A549 (cell line): ENCODE measurements at regions of chr19 and their contacts with region 1.

Region 1: GRCh38 chr19:33302175-33302973 is at the start of gene CEBPA:
- DNase-seq: peak; percentile 93 to 95
- ATAC-seq: peak; percentile 83 to 92
- H3K4me3 ChIP-seq: peak within 1 kb of the TSS; percentile 63
- H3K27ac ChIP-seq: peak within 1 kb of the TSS; percentile 86 to 93
- H3K4me1 ChIP-seq: peaks cover 11% of the 10 kb centered on the region
- CTCF ChIP-seq: peak; percentile 99
- EP300 ChIP-seq: no peak
- POLR2A ChIP-seq: peak; percentile 100
- RAD21 ChIP-seq: no peak; a peak in 3 of 5 replicates
- polyA plus RNA-seq, gene CEBPA: 3.5 and 4.3 TPM in 2 replicates

Region 2: GRCh38 chr19:33235269-33235995 is 66.9 kb before region 1 on chr19:
- CTCF ChIA-PET with region 1: interaction called, 603 read pairs
- POLR2A ChIA-PET with region 1: interaction called, 5 read pairs
- DNase-seq: peak; percentile 88 to 98
- ATAC-seq: peak; percentile 66 to 90
- H3K4me3 ChIP-seq: no peak overlapping the region
- H3K27ac ChIP-seq: 0 out of 6 replicates have a peak overlapping the region, but pooled peaks of 1 of the 2 experiments have one; percentile 13
- H3K4me1 ChIP-seq: no peaks in the 10 kb centered on the region; the same call in 2 of the 3 replicates
- CTCF ChIP-seq: peak; percentile 99
- EP300 ChIP-seq: no peak
- POLR2A ChIP-seq: no peak
- RAD21 ChIP-seq: peak; percentile 94 to 95

Region 3: DNA sequence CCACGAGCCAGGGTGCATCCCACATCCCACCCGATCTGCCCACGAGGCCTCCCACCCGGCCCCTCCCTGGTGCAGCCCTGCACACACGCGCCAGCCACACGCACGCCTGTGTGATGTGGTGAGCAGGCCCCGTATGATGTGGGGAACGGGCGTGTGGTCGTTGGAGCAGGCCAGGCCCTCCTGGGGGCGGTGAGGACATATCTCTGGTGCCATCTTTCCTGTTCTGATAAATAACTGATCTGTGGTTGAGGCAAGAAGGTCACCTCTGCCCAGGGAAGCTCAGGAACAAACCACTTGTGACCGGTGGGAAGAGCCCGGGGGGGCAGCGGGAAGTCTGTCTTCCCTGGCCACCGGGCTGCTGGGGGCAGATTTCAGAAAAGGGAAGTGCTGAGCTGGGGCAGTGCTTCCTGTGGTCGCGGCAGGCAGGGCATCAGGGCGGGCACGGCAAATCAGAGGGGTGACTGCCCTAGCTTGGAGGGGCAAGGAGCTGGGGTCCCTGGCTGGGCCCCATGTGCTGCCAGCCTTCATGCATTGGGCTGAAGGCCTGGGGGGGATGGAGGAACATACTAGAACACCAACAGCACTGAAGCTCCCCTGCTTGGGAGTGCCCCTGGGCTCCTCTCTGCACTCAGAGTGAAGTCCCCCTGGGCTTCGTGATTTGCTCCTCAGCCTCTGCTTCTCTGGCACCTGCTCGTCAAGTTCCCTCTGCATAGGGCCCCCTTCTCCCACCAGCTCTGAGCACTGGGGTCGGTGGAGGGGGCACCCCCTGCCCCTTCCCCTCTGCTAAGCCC is 41.6 kb before region 1 on chr19:
- CTCF ChIA-PET with region 1: interaction called, 30 read pairs
- POLR2A ChIA-PET with region 1: interaction called, 17 read pairs
- DNase-seq: no peak
- ATAC-seq: 0 out of 6 replicates have a peak, but pooled peaks of 1 of the 2 experiments have one; percentile 7
- H3K4me3 ChIP-seq: no peak overlapping the region
- H3K27ac ChIP-seq: no peak overlapping the region
- H3K4me1 ChIP-seq: no peaks in the 10 kb centered on the region
- CTCF ChIP-seq: no peak
- EP300 ChIP-seq: no peak
- POLR2A ChIP-seq: no peak
- RAD21 ChIP-seq: no peak

Region 4: GRCh38 chr19:33286899-33287298 is 15.5 kb before region 1 on chr19:
- CTCF ChIA-PET with region 1: interaction called, 57 read pairs
- POLR2A ChIA-PET with region 1: interaction called, 33 read pairs
- DNase-seq: no peak
- ATAC-seq: no peak
- H3K4me3 ChIP-seq: no peak overlapping the region
- H3K27ac ChIP-seq: no peak overlapping the region
- H3K4me1 ChIP-seq: peaks cover 18% of the 10 kb centered on the region
- CTCF ChIP-seq: no peak
- EP300 ChIP-seq: no peak
- POLR2A ChIP-seq: no peak
- RAD21 ChIP-seq: no peak

Region 5: DNA sequence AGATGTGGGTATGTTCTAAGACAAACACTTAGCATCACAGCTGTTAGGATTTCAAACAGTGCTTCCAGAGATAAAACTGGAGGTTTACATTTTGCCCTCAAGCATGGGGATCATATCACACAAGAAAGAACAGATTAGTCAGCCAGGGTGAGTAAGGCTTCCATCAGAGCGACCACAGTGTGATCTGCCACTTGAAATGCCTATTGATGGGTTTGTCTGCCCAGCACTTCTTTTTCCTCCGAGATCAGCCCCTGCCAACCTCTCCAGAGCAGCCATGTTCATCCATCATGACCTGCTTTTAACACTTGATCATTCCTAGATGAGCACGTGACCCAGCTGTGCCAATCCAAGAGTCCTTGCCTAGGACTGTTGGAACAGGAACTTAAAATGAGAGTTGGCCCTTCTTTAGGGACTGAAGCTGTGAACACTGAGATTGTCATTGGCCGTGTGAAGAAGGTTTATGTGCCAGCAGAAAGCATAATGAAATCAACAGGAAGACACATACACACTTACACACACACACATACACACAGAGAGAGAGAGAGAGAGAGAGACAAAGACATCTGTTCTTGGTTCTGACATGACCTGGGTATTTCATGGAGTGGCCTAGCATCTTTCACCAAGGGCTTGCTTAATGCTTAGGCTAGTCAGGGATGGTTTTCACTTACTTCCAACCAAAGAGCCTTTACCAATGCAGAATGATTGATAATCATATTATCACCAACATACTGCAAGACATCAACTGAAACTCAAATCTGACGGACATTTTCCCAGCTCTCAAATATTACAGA is 65.9 kb after region 1 on chr19:
- CTCF ChIA-PET with region 1: interaction called, 57 read pairs
- POLR2A ChIA-PET with region 1: interaction called, 160 read pairs
- DNase-seq: peak in 1 of 2 experiments; percentile 49
- ATAC-seq: peak in 1 of 2 experiments; percentile 16; a peak in 2 of 6 replicates
- H3K4me3 ChIP-seq: no peak overlapping the region
- H3K27ac ChIP-seq: 0 out of 6 replicates have a peak overlapping the region, but pooled peaks of 1 of the 2 experiments have one; percentile 1
- H3K4me1 ChIP-seq: peaks cover 12% of the 10 kb centered on the region; the same call in 2 of the 3 replicates
- CTCF ChIP-seq: no peak
- EP300 ChIP-seq: no peak
- POLR2A ChIP-seq: no peak
- RAD21 ChIP-seq: no peak

Region 6: GRCh38 chr19:33394006-33394849 is 91.9 kb after region 1 on chr19:
- CTCF ChIA-PET with region 1: interaction called, 23 read pairs
- POLR2A ChIA-PET with region 1: interaction called, 15 read pairs
- DNase-seq: no peak
- ATAC-seq: peak; percentile 5 to 7; a peak in 2 of 6 replicates
- H3K4me3 ChIP-seq: no peak overlapping the region
- H3K27ac ChIP-seq: peak overlapping the region in 1 of 2 experiments; percentile 47; a peak in 3 of 6 replicates
- H3K4me1 ChIP-seq: peaks cover 30% of the 10 kb centered on the region
- CTCF ChIP-seq: no peak
- EP300 ChIP-seq: no peak
- POLR2A ChIP-seq: no peak
- RAD21 ChIP-seq: no peak

Region 7: GRCh38 chr19:33438007-33438671 is 135.8 kb after region 1 on chr19:
- CTCF ChIA-PET with region 1: no interaction called
- POLR2A ChIA-PET with region 1: no interaction called
- DNase-seq: peak in 1 of 2 experiments; percentile 48
- ATAC-seq: peak; percentile 27 to 72; a peak in 4 of 6 replicates
- H3K4me3 ChIP-seq: no peak overlapping the region
- H3K27ac ChIP-seq: no peak overlapping the region
- H3K4me1 ChIP-seq: no peaks in the 10 kb centered on the region
- CTCF ChIP-seq: no peak
- EP300 ChIP-seq: no peak
- POLR2A ChIP-seq: no peak
- RAD21 ChIP-seq: peak in 1 of 2 experiments; percentile 37; a peak in 3 of 5 replicates